ENCODE measurements at regions of chr6 and their contacts with region 1.

Region 1: DNA sequence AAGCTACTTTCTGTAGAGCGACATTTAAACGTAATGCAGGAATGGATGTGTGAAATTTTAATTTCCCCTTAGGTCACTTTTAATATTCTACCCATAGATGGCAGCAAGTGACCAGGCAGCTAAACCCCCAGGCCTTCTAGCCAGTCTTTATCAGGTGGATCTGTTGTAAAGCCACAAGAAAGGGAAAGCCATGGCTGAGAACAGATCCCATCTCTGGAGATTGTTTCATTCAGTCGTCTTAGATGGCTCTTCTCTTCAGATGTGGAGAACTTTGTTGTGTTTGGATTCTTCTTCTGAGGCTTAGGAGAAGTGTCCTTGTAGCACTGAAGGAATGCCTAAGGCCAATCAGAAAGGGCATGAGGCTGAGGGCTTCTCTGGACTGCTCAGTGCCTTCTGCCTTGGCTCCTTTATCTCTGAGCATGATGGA is 15.8 kb upstream of the RNF182 start:
- DNase-seq: no peak
- ATAC-seq: peak; percentile 90
- H3K4me3 ChIP-seq: no peak overlapping the region
- H3K27ac ChIP-seq: no peak overlapping the region
- H3K4me1 ChIP-seq: no peaks in the 10 kb centered on the region
- H3K27me3 ChIP-seq: no peaks in the 10 kb centered on the region
- CTCF ChIP-seq: peak; percentile 89

Region 2: DNA sequence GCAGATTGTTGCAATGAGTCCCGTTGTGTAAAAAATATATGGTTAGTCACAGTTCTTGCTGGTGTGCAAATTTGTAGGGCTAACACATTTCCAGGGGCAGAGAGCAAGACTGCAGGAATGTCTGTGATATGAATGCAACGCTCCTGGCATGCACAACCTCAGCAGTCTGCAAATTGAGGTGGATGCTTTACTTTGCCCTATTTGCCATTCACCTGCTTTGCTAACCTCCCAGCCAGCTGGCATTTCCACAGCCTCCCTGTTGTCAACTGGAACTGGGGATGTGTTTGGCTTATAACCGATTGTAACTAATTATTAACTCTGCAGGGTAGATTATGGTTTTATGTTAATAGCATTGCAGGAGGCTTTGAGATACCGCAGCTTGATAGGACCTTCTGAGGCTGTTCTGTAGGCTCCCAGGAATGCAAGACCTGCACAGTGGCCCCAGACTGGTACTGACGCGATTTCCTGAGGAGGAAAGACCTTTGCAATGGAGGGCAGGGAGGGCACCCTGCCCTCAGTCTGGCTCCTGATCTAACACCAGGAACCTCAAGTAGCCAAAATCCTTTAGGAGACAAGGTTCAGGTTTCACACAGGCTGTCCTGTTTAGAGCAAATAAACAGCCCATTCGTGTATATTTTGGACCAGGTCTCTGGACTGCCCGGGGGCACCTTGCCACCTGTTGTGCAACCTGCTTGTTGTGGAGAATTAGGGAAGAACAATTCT is 1565.4 kb before region 1 on chr6:
- CTCF ChIA-PET with region 1: interaction called, 10 read pairs
- POLR2A ChIA-PET with region 1: no interaction called
- in situ Hi-C with region 1: no loop called
- intact Hi-C with region 1: no loop called
- DNase-seq: no peak
- ATAC-seq: peak; percentile 76
- H3K4me3 ChIP-seq: peak overlapping the region in 1 of 2 experiments; percentile 31; a peak in 2 of 4 replicates
- H3K27ac ChIP-seq: peak overlapping the region; percentile 98
- H3K4me1 ChIP-seq: peaks cover 43% of the 10 kb centered on the region
- H3K27me3 ChIP-seq: no peaks in the 10 kb centered on the region
- CTCF ChIP-seq: no peak

Region 3: GRCh38 chr6:13795041-13795750 is 113.8 kb before region 1 on chr6:
- CTCF ChIA-PET with region 1: interaction called, 3 read pairs
- POLR2A ChIA-PET with region 1: no interaction called
- in situ Hi-C with region 1: no loop called
- intact Hi-C with region 1: loop called (anchors 5 kb)
- DNase-seq: peak; percentile 71
- ATAC-seq: peak; percentile 96
- H3K4me3 ChIP-seq: no peak overlapping the region
- H3K27ac ChIP-seq: no peak overlapping the region
- H3K4me1 ChIP-seq: no peaks in the 10 kb centered on the region
- H3K27me3 ChIP-seq: no peaks in the 10 kb centered on the region
- CTCF ChIP-seq: peak; percentile 95

Region 4: DNA sequence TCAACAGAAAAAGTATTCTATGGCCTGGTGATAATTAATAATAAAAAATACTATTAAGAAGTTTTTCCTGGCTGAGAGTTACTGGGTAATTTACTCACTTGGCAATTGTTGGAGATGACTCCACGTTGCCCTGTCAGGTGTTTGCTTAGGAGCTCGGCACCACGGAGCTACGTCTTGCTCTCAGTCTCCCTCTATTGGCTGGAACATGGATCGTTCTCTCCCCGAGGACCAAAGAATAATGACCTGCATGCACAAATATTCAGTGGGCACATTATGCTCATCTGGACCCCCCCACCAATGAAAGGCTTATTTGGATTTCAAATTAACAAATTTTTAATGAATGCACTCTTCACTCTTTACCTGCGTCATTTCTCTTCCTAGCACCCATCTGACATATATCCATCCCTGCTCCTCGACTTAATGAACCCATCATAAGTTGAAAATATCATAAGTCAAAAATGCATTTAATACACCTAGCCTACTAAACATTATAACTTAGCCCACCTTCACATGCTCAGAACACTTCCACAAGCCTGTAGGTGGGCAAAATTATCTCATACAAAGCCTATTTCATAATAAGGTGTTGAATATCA is 137.6 kb after region 1 on chr6:
- CTCF ChIA-PET with region 1: interaction called, 11 read pairs
- POLR2A ChIA-PET with region 1: no interaction called
- in situ Hi-C with region 1: no loop called
- intact Hi-C with region 1: loop called (anchors 1 kb)
- DNase-seq: peak; percentile 47
- ATAC-seq: peak; percentile 89
- H3K4me3 ChIP-seq: no peak overlapping the region
- H3K27ac ChIP-seq: no peak overlapping the region
- H3K4me1 ChIP-seq: no peaks in the 10 kb centered on the region
- H3K27me3 ChIP-seq: no peaks in the 10 kb centered on the region
- CTCF ChIP-seq: peak; percentile 86

Region 5: GRCh38 chr6:14066782-14067406 is 157.9 kb after region 1 on chr6:
- CTCF ChIA-PET with region 1: interaction called, 22 read pairs
- POLR2A ChIA-PET with region 1: no interaction called
- in situ Hi-C with region 1: no loop called
- intact Hi-C with region 1: loop called (anchors 2 kb)
- DNase-seq: no peak
- ATAC-seq: peak; percentile 88
- H3K4me3 ChIP-seq: no peak overlapping the region
- H3K27ac ChIP-seq: no peak overlapping the region
- H3K4me1 ChIP-seq: no peaks in the 10 kb centered on the region
- H3K27me3 ChIP-seq: no peaks in the 10 kb centered on the region
- CTCF ChIP-seq: peak; percentile 76

Region 6: GRCh38 chr6:14144678-14145113 is 235.7 kb after region 1 on chr6:
- CTCF ChIA-PET with region 1: no interaction called
- POLR2A ChIA-PET with region 1: no interaction called
- in situ Hi-C with region 1: no loop called
- intact Hi-C with region 1: loop called (anchors 5 kb)
- DNase-seq: peak; percentile 53
- ATAC-seq: peak; percentile 96
- H3K4me3 ChIP-seq: no peak overlapping the region
- H3K27ac ChIP-seq: no peak overlapping the region
- H3K4me1 ChIP-seq: no peaks in the 10 kb centered on the region
- H3K27me3 ChIP-seq: no peaks in the 10 kb centered on the region; the same call in 1 of the 2 replicates
- CTCF ChIP-seq: peak; percentile 97

Measured in Panc1 (cell line).